ENCODE measurements at regions of chr9 and their contacts with region 1.

Region 1: GRCh38 chr9:69056191-69056815 is 20.8 kb downstream of the FXN start:
- DNase-seq: no peak
- H3K4me3 ChIP-seq: no peak overlapping the region
- H3K4me3 Mint-ChIP-seq: no peak overlapping the region
- H3K27ac ChIP-seq: no peak overlapping the region
- H3K27ac Mint-ChIP-seq: no peak overlapping the region
- H3K4me1 ChIP-seq: no peaks in the 10 kb centered on the region
- H3K4me1 Mint-ChIP-seq: peaks cover 4 to 15% (median 8%) of the 10 kb centered on the region in 3 donors
- H3K27me3 ChIP-seq: no peaks in the 10 kb centered on the region
- H3K27me3 Mint-ChIP-seq: no peaks in the 10 kb centered on the region

Region 2: GRCh38 chr9:69190086-69190862 is 134.0 kb after region 1 on chr9:
- CTCF ChIA-PET with region 1: interaction called, 54 read pairs
- POLR2A ChIA-PET with region 1: no interaction called
- DNase-seq: no peak
- H3K4me3 ChIP-seq: no peak overlapping the region
- H3K4me3 Mint-ChIP-seq: no peak overlapping the region
- H3K27ac ChIP-seq: no peak overlapping the region
- H3K27ac Mint-ChIP-seq: no peak overlapping the region
- H3K4me1 ChIP-seq: no peaks in the 10 kb centered on the region
- H3K4me1 Mint-ChIP-seq: no peaks in the 10 kb centered on the region
- H3K27me3 ChIP-seq: no peaks in the 10 kb centered on the region
- H3K27me3 Mint-ChIP-seq: no peaks in the 10 kb centered on the region

Measured in CD8-positive, alpha-beta memory T cell (primary cell).